ENCODE measurements at regions of chr2 and their contacts with region 1.

Region 1: DNA sequence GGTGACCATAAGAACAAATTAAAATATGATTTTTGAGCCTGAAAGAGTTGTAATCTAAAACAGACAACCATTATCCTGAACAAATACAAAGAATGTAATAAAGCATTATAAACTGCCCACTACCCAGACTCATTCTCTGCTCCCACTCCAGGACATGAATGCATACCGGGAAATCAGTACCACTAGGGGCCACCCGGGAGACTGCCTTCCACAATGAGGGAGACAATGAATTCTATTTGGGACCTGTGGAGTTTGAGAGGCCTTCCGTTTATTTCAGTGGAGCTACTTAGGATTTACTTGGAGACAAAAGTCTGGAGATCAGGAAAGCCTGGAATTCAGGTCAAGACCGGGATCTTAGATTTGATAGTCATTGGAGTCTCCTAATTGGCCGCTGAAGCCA is 50.0 kb downstream of the NAB1 start:
- DNase-seq: no peak
- H3K4me3 ChIP-seq: no peak overlapping the region
- CTCF ChIP-seq: peak; percentile 62

Region 2: DNA sequence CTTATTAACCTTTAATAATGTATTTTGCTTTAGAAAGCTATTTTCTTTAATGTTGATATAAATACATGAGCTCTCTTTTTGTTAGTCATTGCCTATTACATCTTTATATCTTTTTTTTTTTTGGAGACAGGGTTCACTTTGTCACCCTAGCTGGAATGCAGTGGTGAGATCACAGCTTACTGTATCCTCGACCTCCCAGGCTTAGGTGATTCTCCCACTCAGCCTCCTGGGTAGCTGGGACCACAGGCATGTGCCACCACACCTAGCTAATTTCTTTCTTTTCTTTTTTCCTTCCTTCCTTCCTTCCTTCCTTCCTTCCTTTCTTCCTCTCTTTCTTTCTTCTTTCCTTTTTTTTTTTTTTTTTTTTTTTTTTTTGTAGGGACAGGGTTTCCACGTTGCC is 34.7 kb before region 1 on chr2:
- in situ Hi-C with region 1: loop called (anchors 5 kb)
- DNase-seq: no peak
- H3K4me3 ChIP-seq: no peak overlapping the region
- CTCF ChIP-seq: no peak

Region 3: GRCh38 chr2:190746971-190747761 is 48.3 kb after region 1 on chr2:
- in situ Hi-C with region 1: no loop called
- DNase-seq: no peak
- H3K4me3 ChIP-seq: no peak overlapping the region
- CTCF ChIP-seq: no peak

Region 4: GRCh38 chr2:190759749-190760213 is 60.9 kb after region 1 on chr2:
- in situ Hi-C with region 1: no loop called
- DNase-seq: peak; percentile 60
- H3K4me3 ChIP-seq: no peak overlapping the region
- CTCF ChIP-seq: no peak

Measured in astrocyte of the cerebellum (primary cell).